Ascending aorta (tissue), 2 donors: ENCODE measurements at regions of chr22 and their contacts with region 1.

Region 1: GRCh38 chr22:39502109-39502788 is at the start of gene MIEF1:
- DNase-seq: peak; percentile 91 to 99
- H3K4me3 ChIP-seq: peak within 1 kb of the TSS; percentile 96 to 99
- H3K27ac ChIP-seq: peak within 1 kb of the TSS; percentile 87 to 94
- H3K4me1 ChIP-seq: peaks cover 6 to 19% of the 10 kb centered on the region in 2 donors
- H3K27me3 ChIP-seq: no peaks in the 10 kb centered on the region
- CTCF ChIP-seq: no peak
- total RNA-seq, gene MIEF1: 22.5 TPM

Region 2: DNA sequence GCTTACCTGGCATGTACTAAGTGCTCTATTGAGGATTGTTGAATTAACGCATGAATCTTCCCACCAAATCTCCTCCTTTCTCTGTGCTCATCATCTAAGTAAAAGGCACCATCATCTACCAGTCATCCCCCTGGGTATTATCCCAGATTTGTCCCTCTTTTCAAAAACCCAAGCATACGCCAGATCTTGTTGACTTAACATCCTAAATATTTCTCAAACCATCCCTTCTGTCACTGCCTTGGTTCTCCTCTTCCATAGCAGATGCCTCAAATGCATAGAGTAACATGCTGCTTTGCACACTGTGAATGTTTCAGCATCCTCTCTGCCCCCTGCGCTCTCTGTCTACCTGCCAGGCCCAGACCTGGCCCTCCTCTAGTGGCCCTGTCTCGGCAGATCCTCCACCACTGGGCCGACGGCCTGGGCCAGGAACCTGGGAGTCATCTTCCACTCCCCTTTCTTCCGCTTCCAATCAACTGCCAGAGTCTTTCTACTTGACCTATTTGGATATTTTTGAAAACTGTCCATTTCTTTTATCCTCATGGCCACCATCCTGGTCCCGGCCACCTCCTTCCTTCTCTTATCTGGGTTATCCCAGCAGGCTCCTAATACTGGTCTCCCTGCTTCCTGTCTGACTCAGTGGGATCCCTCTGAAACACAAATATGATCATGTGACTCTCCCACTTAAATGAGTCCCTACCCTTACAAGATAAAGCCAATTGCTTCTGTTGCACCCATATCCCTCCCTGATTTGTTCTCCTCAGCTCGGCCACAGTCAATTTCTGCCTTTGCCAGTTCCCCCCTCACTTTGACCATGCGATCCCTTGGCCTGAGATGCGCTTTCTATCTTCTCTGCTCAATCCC is 106.1 kb before region 1 on chr22:
- intact Hi-C with region 1: loop called (anchors 1 kb)
- DNase-seq: no peak
- H3K4me3 ChIP-seq: no peak overlapping the region
- H3K27ac ChIP-seq: no peak overlapping the region
- H3K4me1 ChIP-seq: peaks cover 3 to 8% of the 10 kb centered on the region in 2 donors
- H3K27me3 ChIP-seq: no peaks in the 10 kb centered on the region
- CTCF ChIP-seq: no peak

Region 3: DNA sequence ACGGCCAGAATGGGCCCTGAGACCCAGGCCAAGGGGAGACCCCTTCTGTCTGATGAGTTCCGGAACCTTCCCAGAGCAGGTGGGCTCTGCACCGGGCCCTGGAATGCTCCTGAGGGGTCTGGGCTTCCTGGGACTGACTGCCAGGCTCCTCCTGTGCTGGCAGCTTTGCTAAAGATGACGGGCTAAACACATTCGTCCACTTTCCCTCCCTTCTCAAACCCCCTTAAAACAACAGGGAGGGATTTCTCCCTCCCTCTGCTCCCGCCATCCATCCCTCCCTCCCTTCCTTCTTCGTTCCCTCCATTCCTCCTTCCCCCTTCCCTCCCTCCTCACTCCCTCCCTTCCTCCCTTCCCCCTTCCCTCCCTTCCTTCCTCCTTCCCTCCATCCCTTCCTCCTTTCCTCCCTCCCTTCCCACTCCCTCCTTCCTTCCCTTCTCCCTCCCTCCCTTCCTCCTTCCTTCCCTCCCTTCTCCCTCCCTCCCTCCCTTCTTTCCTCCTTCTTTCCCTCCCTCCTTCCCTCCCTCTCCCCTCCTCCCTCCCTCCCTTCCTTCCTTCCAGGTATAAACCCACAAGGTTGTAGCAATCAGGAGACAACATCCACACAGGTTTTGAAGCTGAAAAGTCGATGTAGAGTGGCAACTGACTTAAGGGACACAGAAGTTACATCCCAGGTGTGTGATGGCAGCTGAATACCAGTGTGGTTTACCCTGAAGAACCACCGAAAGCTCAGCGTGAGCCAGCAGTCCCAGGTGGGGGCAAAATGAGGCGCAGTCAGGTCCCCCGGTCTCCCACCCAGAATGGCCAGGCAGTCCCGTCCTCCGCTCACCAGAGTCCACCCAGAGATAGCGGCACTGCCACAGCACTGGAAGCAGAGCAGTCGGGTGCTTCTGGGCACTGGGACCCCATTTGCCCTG is 64.2 kb before region 1 on chr22:
- intact Hi-C with region 1: loop called (anchors 2 kb)
- DNase-seq: no peak
- H3K4me3 ChIP-seq: peak overlapping the region; percentile 17 to 56
- H3K27ac ChIP-seq: no peak overlapping the region
- H3K4me1 ChIP-seq: peaks cover 5 to 6% of the 10 kb centered on the region in 2 donors
- H3K27me3 ChIP-seq: no peaks in the 10 kb centered on the region
- CTCF ChIP-seq: no peak

Region 4: GRCh38 chr22:39471381-39472141 is 30.7 kb before region 1 on chr22:
- intact Hi-C with region 1: no loop called
- DNase-seq: no peak
- H3K4me3 ChIP-seq: no peak overlapping the region
- H3K27ac ChIP-seq: no peak overlapping the region
- H3K4me1 ChIP-seq: no peaks in the 10 kb centered on the region
- H3K27me3 ChIP-seq: no peaks in the 10 kb centered on the region
- CTCF ChIP-seq: no peak

Region 5: GRCh38 chr22:39520054-39520891 is 18.0 kb after region 1 on chr22 and contains the start of gene ATF4:
- intact Hi-C with region 1: loop called (anchors 1 kb)
- DNase-seq: peak; percentile 95 to 99
- H3K4me3 ChIP-seq: peak within 1 kb of the TSS; percentile 92 to 100
- H3K27ac ChIP-seq: peak within 1 kb of the TSS; percentile 100
- H3K4me1 ChIP-seq: peaks cover 27 to 36% of the 10 kb centered on the region in 2 donors
- H3K27me3 ChIP-seq: no peaks in the 10 kb centered on the region
- CTCF ChIP-seq: peak in 1 of 3 experiments; percentile 3
- total RNA-seq, gene ATF4: 173 TPM